ENCODE measurements at regions of chr10 and their contacts with region 1.

Region 1: DNA sequence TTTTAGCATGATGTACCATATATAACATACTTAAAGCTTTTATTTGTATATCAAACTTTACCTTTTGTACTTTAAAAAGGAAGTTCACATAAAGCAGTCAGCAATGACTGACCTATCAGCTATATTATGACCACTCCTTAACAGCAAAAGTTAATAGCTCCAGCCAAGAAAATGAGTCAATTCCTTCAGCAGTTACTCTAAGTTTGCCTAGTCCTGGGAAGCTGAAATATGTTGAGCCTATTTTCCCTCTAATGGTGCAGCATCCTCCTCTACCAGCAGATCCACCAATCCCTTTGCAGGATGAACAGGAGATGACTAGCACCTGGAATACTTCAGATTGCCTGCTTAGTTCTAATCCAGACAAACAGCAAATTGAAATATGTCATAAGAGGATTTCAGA is 64.2 kb downstream of the CUL2 start:
- DNase-seq: no peak
- H3K4me3 ChIP-seq: no peak overlapping the region
- H3K27ac ChIP-seq: no peak overlapping the region
- H3K4me1 ChIP-seq: no peaks in the 10 kb centered on the region
- H3K27me3 ChIP-seq: no peaks in the 10 kb centered on the region

Region 2: GRCh38 chr10:34979938-34980337 is 46.0 kb before region 1 on chr10:
- CTCF ChIA-PET with region 1: no interaction called
- POLR2A ChIA-PET with region 1: no interaction called
- DNase-seq: no peak
- H3K4me3 ChIP-seq: no peak overlapping the region
- H3K27ac ChIP-seq: no peak overlapping the region
- H3K4me1 ChIP-seq: no peaks in the 10 kb centered on the region
- H3K27me3 ChIP-seq: no peaks in the 10 kb centered on the region

Region 3: DNA sequence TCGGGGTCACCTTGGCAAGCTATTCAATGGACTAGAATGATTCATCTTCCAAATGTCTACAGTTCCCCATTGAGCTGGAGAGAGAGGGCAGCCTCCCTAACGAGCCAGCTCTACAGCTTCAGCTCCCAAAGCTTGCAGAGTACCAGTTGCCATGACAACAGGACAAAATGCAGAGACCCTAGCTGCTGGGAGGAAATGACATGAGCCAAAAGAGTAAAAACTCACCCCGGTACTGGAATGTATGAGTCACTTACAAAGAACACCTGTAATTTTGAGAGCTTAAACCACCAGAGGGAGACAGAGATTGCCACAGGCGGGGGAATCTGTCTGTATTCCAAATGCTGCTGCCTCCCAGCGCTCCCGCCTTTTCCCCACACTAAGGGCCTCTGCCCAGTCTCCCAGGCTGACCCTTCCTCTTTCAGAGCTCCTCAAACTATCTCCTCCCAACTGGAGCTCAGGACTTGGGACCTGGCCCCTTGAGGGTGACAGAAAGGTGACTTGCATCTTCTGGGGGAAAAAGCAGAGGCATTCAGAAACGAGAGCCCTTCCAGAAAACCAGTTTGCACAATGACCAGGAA is 31.3 kb before region 1 on chr10:
- CTCF ChIA-PET with region 1: interaction called, 16 read pairs
- POLR2A ChIA-PET with region 1: no interaction called
- DNase-seq: peak; percentile 94 to 98 (median 97)
- H3K4me3 ChIP-seq: no peak overlapping the region
- H3K27ac ChIP-seq: no peak overlapping the region
- H3K4me1 ChIP-seq: peaks cover 0 to 15% (median 2%) of the 10 kb centered on the region in 4 experiments
- H3K27me3 ChIP-seq: no peaks in the 10 kb centered on the region

Measured in common myeloid progenitor, CD34-positive (primary cell).